IMR-90 (cell line): ENCODE measurements at regions of chr19 and their contacts with region 1.

Region 1: GRCh38 chr19:17996826-17997316 is 11.1 kb upstream of the ARRDC2 start:
- DNase-seq: peak; percentile 52
- ATAC-seq: peak; percentile 85
- H3K4me3 ChIP-seq: no peak overlapping the region
- H3K27ac ChIP-seq: no peak overlapping the region
- H3K4me1 ChIP-seq: no peaks in the 10 kb centered on the region
- H3K27me3 ChIP-seq: peaks cover 2% of the 10 kb centered on the region; the same call in 1 of the 2 replicates
- CTCF ChIP-seq: peak; percentile 98
- POLR2A ChIP-seq: 0 out of 2 replicates have a peak, but pooled peaks have one; percentile 37
- RAD21 ChIP-seq: peak; percentile 96

Region 2: DNA sequence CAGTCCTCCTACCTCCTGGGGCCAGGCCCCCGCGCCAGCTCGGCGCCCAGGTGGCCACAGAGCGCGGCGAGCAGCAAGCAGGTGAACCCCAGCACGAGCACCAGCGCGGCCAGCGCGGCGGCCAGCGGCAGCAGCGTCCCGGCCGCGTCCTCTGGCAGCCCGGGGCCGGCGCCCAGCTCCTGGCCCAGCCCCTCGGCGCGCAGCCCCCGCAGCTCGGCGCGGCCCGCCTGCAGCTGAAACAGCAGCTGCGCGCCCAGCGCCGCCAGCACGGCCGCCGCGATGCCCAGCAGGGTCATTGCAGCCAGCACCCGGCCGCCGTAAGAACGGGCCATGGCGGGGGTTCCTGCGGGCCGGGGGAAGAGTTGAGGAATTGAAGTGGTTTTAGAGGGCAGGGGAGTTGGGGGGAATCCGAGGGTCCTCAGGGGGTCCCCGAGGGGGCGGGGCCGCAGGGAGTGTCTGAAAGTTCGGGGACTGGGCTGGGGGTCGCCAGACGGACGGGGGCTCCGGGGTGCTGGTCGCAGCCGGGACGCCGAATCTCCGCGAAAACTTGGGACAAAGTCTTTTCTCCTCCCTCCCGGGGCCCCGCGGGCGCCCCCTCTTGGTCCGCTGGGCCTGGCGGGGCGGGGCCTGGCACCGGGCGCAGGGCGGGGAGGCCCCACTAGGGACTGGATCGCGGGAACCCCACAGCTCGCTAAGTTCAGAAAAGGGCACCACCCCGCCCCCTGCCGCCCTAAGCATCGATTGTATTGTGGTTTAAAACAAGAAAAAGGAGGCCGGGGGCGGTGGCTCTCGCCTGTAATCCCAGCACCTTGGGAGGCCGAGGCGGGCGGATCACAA is 548.5 kb before region 1 on chr19 and contains the start of gene TMEM221:
- CTCF ChIA-PET with region 1: no interaction called
- POLR2A ChIA-PET with region 1: no interaction called
- dilution Hi-C with region 1: no loop called
- in situ Hi-C with region 1: no loop called
- intact Hi-C with region 1: no loop called
- DNase-seq: no peak
- ATAC-seq: peak; percentile 93
- H3K4me3 ChIP-seq: peak within 1 kb of the TSS; percentile 30
- H3K27ac ChIP-seq: no peak within 1 kb of the TSS
- H3K4me1 ChIP-seq: no peaks in the 10 kb centered on the region
- H3K27me3 ChIP-seq: peaks cover 12% of the 10 kb centered on the region
- CTCF ChIP-seq: peak; percentile 55
- POLR2A ChIP-seq: no peak
- RAD21 ChIP-seq: peak; percentile 17; the same call in 1 of the 2 replicates
- total RNA-seq, gene TMEM221: not detected in 2 replicates

Region 3: GRCh38 chr19:17873786-17874757 is 122.8 kb before region 1 on chr19:
- CTCF ChIA-PET with region 1: no interaction called
- POLR2A ChIA-PET with region 1: no interaction called
- dilution Hi-C with region 1: no loop called
- in situ Hi-C with region 1: no loop called
- intact Hi-C with region 1: loop called (anchors 1 kb)
- DNase-seq: no peak
- ATAC-seq: peak; percentile 64
- H3K4me3 ChIP-seq: no peak overlapping the region
- H3K27ac ChIP-seq: no peak overlapping the region
- H3K4me1 ChIP-seq: no peaks in the 10 kb centered on the region
- H3K27me3 ChIP-seq: peaks cover 47% of the 10 kb centered on the region
- CTCF ChIP-seq: no peak
- POLR2A ChIP-seq: no peak
- RAD21 ChIP-seq: no peak

Region 4: GRCh38 chr19:17915951-17916593 is 80.8 kb before region 1 on chr19:
- CTCF ChIA-PET with region 1: no interaction called
- POLR2A ChIA-PET with region 1: no interaction called
- dilution Hi-C with region 1: no loop called
- in situ Hi-C with region 1: no loop called
- intact Hi-C with region 1: no loop called
- DNase-seq: no peak
- ATAC-seq: no peak
- H3K4me3 ChIP-seq: no peak overlapping the region
- H3K27ac ChIP-seq: no peak overlapping the region
- H3K4me1 ChIP-seq: no peaks in the 10 kb centered on the region
- H3K27me3 ChIP-seq: no peaks in the 10 kb centered on the region
- CTCF ChIP-seq: no peak
- POLR2A ChIP-seq: no peak
- RAD21 ChIP-seq: no peak

Region 5: DNA sequence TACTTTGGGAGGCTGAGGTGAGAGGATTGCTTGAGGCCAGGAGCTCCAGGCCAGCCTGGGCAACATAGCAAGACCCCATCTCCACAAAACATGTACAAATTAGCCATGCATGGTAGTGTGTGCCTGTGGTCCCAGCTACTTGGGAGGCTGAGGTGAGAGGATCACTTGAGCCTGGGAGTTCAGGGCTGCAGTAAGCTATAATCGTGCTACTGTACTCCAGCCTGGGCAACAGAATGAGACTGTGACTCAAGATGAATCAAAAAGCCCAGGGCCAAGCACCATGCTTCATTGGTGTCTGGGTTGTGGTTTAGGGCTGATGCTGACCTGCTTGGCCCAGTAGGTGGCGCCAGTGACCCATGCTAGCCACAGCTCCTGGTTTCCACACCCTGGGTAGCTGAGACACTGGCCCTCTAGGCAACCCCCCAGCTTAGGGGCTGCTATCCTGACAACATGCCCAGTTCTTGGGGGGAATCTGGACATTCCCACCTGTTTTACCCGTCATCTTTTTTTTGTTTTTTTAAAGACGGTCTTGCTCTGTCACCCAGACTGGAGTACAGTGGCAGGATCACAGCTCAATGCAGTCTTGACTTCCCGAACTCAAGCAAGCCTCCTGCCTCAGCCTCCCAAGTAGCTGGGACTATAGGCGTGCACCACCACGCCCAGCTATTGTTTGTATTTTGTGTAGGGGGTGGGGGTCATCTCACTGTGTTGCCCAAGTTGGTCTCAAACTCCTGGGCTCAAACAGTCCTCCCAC is 58.6 kb before region 1 on chr19:
- CTCF ChIA-PET with region 1: interaction called, 17 read pairs
- POLR2A ChIA-PET with region 1: no interaction called
- dilution Hi-C with region 1: no loop called
- in situ Hi-C with region 1: loop called (anchors 5 kb)
- intact Hi-C with region 1: loop called (anchors 1 kb)
- DNase-seq: peak; percentile 88
- ATAC-seq: peak; percentile 99
- H3K4me3 ChIP-seq: no peak overlapping the region
- H3K27ac ChIP-seq: no peak overlapping the region
- H3K4me1 ChIP-seq: 0 out of 2 replicates have a peak, but pooled peaks cover 3% of the 10 kb centered on the region
- H3K27me3 ChIP-seq: no peaks in the 10 kb centered on the region
- CTCF ChIP-seq: peak; percentile 98
- POLR2A ChIP-seq: 0 out of 2 replicates have a peak, but pooled peaks have one; percentile 43
- RAD21 ChIP-seq: peak; percentile 97

Region 6: GRCh38 chr19:17947815-17948513 is 48.9 kb before region 1 on chr19:
- CTCF ChIA-PET with region 1: no interaction called
- POLR2A ChIA-PET with region 1: no interaction called
- dilution Hi-C with region 1: no loop called
- in situ Hi-C with region 1: no loop called
- intact Hi-C with region 1: loop called (anchors 2 kb)
- DNase-seq: peak; percentile 87
- ATAC-seq: peak; percentile 87
- H3K4me3 ChIP-seq: peak overlapping the region; percentile 56
- H3K27ac ChIP-seq: no peak overlapping the region; the same call in 1 of the 2 replicates
- H3K4me1 ChIP-seq: peaks cover 5% of the 10 kb centered on the region
- H3K27me3 ChIP-seq: peaks cover 44% of the 10 kb centered on the region
- CTCF ChIP-seq: no peak
- POLR2A ChIP-seq: no peak
- RAD21 ChIP-seq: no peak

Region 7: DNA sequence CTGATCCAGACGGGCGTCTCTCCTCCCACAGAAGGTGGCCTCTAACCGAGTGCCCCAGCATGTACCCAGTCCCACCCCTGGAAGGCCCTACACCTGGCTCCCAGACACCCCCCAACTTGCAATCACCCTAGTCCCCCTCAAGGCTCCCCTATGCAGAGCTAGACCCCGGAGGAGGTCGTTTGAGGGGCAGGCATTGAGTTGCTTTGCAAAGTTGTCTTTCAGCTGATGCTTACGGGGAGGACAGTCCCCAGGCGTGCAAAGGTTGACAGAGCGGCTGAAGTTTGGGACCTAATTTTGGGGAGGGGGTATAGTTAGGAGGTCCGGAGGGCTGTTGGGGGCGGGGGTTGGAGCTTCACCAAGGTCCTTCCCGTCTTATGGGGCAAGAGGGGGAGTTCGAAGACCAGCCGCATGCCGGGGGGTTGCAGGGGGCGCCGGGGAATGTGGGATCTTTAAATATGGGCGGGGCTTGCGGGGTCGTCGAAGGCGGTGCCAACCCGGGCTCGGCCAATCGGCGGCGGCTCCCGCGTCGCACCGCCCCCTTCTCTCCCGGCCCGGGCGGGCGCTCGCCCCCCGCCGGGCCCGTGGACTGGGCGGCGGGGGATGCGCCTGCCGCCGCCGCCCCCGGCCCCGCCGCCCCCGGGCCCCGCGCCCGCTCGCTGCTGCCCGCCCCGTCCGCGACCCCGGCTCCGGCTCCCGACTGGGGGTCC is 30.2 kb before region 1 on chr19 and contains the start of gene KCNN1:
- CTCF ChIA-PET with region 1: no interaction called
- POLR2A ChIA-PET with region 1: no interaction called
- dilution Hi-C with region 1: no loop called
- in situ Hi-C with region 1: no loop called
- intact Hi-C with region 1: no loop called
- DNase-seq: no peak
- ATAC-seq: peak; percentile 70
- H3K4me3 ChIP-seq: peak within 1 kb of the TSS; percentile 27; the same call in 1 of the 2 replicates
- H3K27ac ChIP-seq: no peak within 1 kb of the TSS
- H3K4me1 ChIP-seq: no peaks in the 10 kb centered on the region
- H3K27me3 ChIP-seq: peaks cover 62% of the 10 kb centered on the region
- CTCF ChIP-seq: no peak
- POLR2A ChIP-seq: no peak
- RAD21 ChIP-seq: no peak
- total RNA-seq, gene KCNN1: under 0.01 TPM in 1 of 2 replicates, not detected in the other

Region 8: DNA sequence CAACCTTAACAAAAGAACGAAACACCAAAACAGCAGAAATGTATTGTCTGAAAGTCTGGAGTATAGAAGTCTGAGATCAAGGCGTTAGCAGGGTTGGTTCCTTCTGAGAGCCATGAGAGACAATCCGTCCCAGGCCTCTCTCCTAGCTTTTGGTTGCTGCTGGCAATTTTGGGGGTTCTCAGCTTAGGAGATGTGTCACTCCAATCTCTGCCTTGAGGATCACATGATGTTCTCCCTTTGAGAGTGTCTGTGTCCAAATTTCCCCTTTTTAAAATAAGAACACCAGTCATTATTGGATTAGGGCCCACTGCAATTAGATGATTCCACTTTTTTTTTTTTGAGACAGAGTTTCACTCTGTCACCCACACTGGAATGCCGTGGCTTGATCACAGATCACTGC is 19.9 kb before region 1 on chr19:
- CTCF ChIA-PET with region 1: interaction called, 3 read pairs
- POLR2A ChIA-PET with region 1: interaction called, 12 read pairs
- dilution Hi-C with region 1: no loop called
- in situ Hi-C with region 1: no loop called
- intact Hi-C with region 1: no loop called
- DNase-seq: no peak
- ATAC-seq: no peak
- H3K4me3 ChIP-seq: no peak overlapping the region
- H3K27ac ChIP-seq: no peak overlapping the region
- H3K4me1 ChIP-seq: no peaks in the 10 kb centered on the region
- H3K27me3 ChIP-seq: peaks cover 20% of the 10 kb centered on the region
- CTCF ChIP-seq: no peak
- POLR2A ChIP-seq: no peak
- RAD21 ChIP-seq: no peak

Region 9: GRCh38 chr19:18401580-18402112 is 404.8 kb after region 1 on chr19:
- CTCF ChIA-PET with region 1: no interaction called
- POLR2A ChIA-PET with region 1: no interaction called
- dilution Hi-C with region 1: no loop called
- in situ Hi-C with region 1: no loop called
- intact Hi-C with region 1: no loop called
- DNase-seq: peak; percentile 69
- ATAC-seq: peak; percentile 59
- H3K4me3 ChIP-seq: no peak overlapping the region
- H3K27ac ChIP-seq: no peak overlapping the region
- H3K4me1 ChIP-seq: peaks cover 21% of the 10 kb centered on the region
- H3K27me3 ChIP-seq: no peaks in the 10 kb centered on the region
- CTCF ChIP-seq: peak; percentile 45
- POLR2A ChIP-seq: no peak
- RAD21 ChIP-seq: no peak; the same call in 1 of the 2 replicates